Caco-2 (cell line): ENCODE measurements at regions of chr2 and their contacts with region 1.

Region 1: GRCh38 chr2:134466141-134466540 is 212.3 kb downstream of the MGAT5 start:
- DNase-seq: peak; percentile 62 to 68
- H3K4me3 ChIP-seq: no peak overlapping the region
- H3K4me3 Mint-ChIP-seq: no peak overlapping the region
- H3K27ac Mint-ChIP-seq: no peak overlapping the region
- H3K4me1 ChIP-seq: no peaks in the 10 kb centered on the region
- H3K4me1 Mint-ChIP-seq: no peaks in the 10 kb centered on the region
- H3K27me3 ChIP-seq: no peaks in the 10 kb centered on the region
- H3K27me3 Mint-ChIP-seq: no peaks in the 10 kb centered on the region
- CTCF ChIP-seq: peak; percentile 66 to 83

Region 2: DNA sequence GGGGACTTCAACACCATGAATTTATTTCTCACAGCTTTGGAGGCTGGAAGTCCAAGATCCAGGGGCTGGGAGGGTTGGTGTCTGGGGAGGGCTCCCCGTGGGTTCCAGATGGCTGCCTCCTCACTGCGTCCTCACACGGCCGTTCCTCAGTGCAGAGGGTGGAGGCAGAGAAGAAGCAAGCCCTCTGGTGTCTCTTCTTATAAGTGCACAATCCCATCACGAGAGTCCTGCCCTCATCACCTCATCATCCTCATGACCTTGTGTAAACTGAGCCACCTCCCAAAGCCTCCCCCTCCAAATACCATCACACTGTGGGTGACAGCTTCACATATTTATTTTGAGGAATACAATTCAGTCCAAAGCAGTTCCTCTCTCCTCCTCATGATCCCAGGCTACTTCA is 226.4 kb after region 1 on chr2:
- CTCF ChIA-PET with region 1: no interaction called
- POLR2A ChIA-PET with region 1: no interaction called
- intact Hi-C with region 1: loop called (anchors 5 kb)
- DNase-seq: no peak
- H3K4me3 ChIP-seq: no peak overlapping the region
- H3K4me3 Mint-ChIP-seq: no peak overlapping the region
- H3K27ac Mint-ChIP-seq: no peak overlapping the region
- H3K4me1 ChIP-seq: no peaks in the 10 kb centered on the region
- H3K4me1 Mint-ChIP-seq: no peaks in the 10 kb centered on the region
- H3K27me3 ChIP-seq: no peaks in the 10 kb centered on the region
- H3K27me3 Mint-ChIP-seq: no peaks in the 10 kb centered on the region
- CTCF ChIP-seq: peak in 1 of 2 experiments; percentile 7

Region 3: GRCh38 chr2:134778368-134778767 is 312.2 kb after region 1 on chr2:
- CTCF ChIA-PET with region 1: no interaction called
- POLR2A ChIA-PET with region 1: no interaction called
- intact Hi-C with region 1: loop called (anchors 1 kb)
- DNase-seq: peak in 1 of 2 experiments; percentile 10
- H3K4me3 ChIP-seq: no peak overlapping the region
- H3K4me3 Mint-ChIP-seq: no peak overlapping the region
- H3K27ac Mint-ChIP-seq: no peak overlapping the region
- H3K4me1 ChIP-seq: 0 out of 2 replicates have a peak, but pooled peaks cover 3% of the 10 kb centered on the region
- H3K4me1 Mint-ChIP-seq: no peaks in the 10 kb centered on the region
- H3K27me3 ChIP-seq: no peaks in the 10 kb centered on the region
- H3K27me3 Mint-ChIP-seq: no peaks in the 10 kb centered on the region
- CTCF ChIP-seq: peak; percentile 49 to 50